Left cardiac atrium (tissue), 4 donors: ENCODE measurements at regions of chr17 and their contacts with region 1.

Region 1: DNA sequence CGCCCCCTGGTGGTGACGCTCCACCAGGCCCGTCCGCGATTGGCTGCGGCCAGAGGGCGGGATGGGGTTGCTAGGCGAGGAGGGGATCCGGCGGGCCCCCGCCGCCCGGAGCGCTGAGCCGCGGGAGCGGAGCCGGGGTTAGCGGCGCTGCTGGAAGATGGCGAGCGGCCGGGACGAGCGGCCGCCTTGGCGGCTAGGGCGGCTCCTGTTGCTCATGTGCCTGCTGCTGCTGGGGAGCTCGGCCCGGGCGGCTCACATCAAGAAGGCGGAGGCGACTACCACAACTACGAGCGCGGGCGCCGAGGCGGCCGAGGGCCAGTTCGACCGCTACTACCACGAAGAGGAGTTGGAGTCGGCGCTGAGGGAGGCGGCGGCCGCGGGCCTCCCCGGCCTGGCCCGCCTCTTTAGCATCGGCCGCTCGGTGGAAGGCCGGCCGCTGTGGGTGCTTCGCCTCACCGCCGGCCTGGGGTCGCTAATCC is at the start of gene CPD:
- DNase-seq: peak; percentile 98
- ATAC-seq: peak; percentile 99
- total RNA-seq, gene CPD: 25.2 to 37.8 TPM

Region 2: DNA sequence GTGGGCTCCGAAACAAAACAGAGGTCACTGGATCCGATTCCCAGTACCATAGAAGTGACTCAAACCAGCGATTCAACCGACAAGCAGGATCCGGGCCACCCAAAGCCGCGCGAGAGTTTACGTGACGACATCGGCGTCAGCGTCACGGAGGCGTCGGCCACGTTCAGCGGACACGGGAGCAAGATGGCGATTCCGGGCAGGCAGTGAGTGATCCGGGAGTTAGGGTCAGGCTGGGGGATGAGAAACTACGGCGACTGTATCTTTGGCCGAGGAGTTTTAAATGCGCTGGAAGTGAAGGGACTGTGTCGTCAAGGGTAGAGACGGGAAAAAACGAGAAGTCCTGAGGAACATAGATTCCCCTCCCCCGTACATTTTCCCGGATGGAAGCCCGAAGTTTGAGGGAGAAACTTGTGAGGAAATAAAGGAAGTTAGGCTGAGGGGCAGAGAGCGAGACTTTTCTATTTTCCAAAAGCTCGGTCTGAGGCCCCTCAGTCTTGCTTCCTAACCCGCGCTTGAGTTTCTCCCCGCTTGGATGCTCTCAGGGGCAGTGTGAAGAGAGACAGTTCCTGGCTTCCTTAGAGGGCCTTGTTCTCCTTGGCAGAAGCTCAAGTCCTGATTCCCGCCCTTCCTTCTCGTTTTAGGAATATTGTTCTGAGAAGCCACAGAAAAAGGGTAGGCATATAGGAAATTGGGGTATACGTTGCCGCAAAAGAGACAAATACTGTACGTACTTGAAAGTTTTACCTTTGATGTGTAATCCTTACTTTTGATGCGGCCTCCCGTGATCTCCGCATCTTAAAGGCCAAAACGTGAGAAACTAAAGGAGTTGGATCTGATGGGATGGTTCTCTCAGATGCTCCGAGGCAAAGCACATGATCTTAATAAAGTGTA is 262.0 kb before region 1 on chr17 and contains the start of gene NSRP1:
- intact Hi-C with region 1: loop called in 1 of 2 experiments (anchors 5 kb)
- DNase-seq: peak; percentile 96
- ATAC-seq: peak; percentile 99
- total RNA-seq, gene NSRP1: 22.1 to 33.8 TPM

Region 3: DNA sequence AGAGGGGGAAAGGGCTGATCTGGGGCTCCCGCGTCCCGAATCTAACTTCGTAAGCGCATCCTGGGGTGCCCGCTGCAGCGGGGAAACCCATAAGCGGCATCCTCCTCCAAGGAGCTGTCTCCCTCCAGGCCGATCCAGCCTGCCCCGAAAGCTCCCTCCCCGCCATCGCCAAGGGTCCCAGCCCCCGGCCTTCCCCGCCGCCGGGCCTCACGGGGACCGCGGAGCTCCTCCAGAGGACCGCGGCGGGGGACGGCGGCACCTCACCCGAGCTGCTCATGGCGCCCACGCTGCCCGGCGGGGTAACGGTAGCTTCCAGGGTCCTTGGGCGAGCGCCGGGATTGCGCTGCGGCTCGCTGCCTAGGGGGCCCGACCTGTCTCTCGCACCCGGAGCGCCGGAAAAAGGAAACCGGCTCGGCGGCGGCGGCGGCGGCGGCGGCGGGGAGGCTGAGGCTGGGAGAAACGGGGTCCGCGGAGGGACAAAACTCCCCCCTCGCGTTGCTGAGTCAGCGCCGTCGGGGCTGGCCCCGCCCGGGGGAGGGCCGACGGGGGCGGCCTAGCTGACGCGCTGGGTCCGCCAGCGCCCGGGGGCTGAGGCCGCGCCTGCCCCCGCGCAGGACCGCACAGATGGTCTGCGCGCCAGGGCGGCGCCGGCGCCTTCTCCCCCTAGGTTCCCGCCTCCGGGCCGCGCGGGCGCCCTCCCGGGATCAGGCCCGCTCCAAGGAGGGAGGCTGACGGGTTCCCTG is 87.1 kb before region 1 on chr17 and contains the start of gene BLMH:
- intact Hi-C with region 1: loop called in 1 of 2 experiments (anchors 10 kb)
- DNase-seq: peak; percentile 88
- ATAC-seq: peak; percentile 97 to 99
- total RNA-seq, gene BLMH: 16.9 to 19.8 TPM

Region 4: DNA sequence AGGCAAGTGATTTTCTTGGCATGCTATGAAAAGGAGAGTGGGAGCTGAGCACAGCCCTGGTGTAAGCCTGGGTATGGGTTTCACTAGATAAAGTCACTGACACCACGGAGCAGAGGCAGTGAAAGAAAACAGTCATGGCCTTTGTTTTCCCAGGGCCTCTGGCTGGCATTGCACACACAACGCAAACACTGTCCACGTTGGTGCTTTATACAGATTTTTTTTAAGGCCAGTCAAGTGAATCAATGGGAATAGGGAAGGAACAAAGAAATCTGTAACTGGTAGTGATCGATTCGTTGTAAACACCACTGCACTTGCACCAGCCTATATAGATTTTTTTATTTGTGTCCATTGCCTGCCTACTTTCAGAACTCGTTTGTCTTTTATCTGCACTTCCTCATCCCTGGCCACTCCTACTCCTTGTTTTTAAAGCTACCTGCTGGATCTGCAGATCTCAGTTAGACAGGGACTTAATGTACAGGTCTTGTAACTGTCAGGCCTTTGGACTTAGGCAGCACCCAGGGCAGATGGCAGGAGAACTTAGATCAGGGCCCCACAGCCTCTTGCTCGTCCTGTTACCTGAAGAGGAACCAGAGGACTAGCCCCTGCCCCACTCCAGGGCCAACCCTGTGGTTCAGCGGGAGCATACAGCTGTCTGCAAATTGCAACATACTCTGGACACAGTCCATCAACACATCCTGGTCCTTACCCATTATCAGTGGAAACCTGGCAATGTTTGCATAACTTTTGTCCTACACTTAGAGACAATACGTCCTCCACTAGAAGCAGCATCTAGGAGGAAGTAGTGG is 34.4 kb before region 1 on chr17:
- intact Hi-C with region 1: loop called in 1 of 2 experiments (anchors 5 kb)
- DNase-seq: peak; percentile 66
- ATAC-seq: peak; percentile 81 to 86